Transverse colon (tissue), 4 donors: ENCODE measurements at regions of chr18 and their contacts with region 1.

Region 1: GRCh38 chr18:3447895-3448837 is 1.8 kb upstream of the TGIF1 start:
- DNase-seq: peak; percentile 95
- H3K4me3 ChIP-seq: peak overlapping the region; percentile 68 to 87 (median 80)
- H3K27ac ChIP-seq: peak overlapping the region; percentile 98 to 99 (median 99)
- H3K4me1 ChIP-seq: peaks cover 4 to 20% (median 10%) of the 10 kb centered on the region in 4 donors
- H3K27me3 ChIP-seq: no peaks in the 10 kb centered on the region
- CTCF ChIP-seq: peak in 1 of 5 experiments; percentile 15
- EP300 ChIP-seq: no peak
- POLR2A ChIP-seq: peak; percentile 97

Region 2: DNA sequence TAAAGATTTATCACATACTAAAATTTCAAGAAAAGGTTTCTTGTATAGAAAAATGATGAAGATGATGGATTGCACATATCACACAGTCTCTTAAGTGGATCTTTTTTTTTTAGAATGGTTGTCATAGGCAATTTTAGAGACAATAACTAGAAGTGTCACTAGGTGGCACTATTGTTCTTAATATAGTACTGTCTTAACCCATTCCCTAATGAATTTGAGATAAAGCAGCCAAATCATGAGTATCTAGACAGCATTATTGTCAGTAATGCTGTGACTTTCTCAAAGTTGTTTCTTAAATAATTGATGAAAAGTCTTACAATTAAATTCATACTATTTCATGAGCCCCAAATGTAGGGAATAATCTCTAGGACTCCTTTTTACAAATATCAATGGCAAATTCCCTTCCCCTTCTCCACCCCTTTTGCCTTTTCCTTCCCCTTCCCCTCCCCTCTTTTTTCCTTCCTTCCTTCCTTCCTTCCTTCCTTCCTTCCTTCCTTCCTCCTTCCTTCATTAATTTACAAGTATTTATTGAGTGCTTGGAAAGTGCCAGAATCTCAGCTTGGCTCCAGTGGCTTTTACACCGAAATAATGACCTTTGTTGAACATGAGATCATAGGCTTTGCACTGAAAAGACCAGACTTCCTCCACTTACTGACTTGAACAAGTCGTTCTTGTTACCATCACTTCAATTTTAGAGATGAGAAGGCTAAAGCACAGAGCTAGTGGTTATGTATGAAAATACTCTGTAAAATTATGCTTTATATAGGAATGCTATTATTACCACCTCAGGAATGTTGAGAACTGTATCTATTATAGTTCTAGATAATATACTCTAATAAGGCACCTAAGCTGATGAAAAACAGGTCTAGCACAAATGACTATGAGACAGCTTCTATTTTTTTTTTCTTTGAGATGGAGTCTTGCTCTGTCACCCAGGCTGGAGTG is 166.4 kb before region 1 on chr18:
- in situ Hi-C with region 1: loop called in 3 of 4 experiments (anchors 10 to 25 kb)
- intact Hi-C with region 1: loop called (anchors 10 kb)
- DNase-seq: no peak
- H3K4me3 ChIP-seq: no peak overlapping the region
- H3K27ac ChIP-seq: peak overlapping the region in 1 of 4 donors; percentile 9
- H3K4me1 ChIP-seq: no peaks in the 10 kb centered on the region
- H3K27me3 ChIP-seq: no peaks in the 10 kb centered on the region
- CTCF ChIP-seq: peak; percentile 64 to 85 (median 78)
- EP300 ChIP-seq: no peak
- POLR2A ChIP-seq: no peak

Region 3: DNA sequence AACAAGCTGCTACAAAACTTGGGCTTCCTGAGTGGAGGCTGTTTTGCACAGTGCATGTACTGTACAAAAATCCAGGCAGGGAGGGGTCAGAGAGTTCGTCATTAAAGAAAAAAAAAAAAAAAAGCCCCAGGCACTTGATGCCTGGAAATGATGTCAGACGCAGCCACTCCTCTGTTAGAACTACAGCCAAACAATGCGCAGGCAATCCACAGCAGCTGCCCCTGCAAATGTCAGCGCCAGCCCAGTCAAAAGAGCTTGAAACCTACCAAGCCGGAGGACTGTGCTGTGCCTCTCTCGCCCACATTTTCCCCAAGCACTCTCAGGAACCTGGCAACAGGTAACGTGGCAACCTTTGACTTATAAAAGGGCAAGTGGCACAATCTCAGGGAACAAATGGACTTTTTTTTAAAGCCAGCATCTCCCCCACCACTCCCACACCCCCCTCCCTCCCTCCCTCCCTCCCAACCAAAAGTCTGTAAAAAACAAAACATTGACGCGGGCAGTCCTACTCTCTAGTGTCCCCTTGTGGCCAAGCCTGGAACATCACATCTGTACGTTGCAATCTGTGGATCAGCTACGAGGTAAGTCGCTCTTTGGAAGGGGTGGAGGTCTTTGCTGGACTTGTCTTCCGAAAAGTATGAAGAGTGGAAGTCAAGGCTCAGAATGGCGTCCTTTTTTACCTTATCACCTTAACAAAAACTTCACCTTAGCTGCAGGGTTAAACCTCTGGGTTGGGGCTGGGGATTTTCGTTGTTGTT is 145.9 kb after region 1 on chr18:
- in situ Hi-C with region 1: loop called in 2 of 4 experiments (anchors 10 to 25 kb)
- intact Hi-C with region 1: loop called (anchors 2 kb)
- DNase-seq: peak; percentile 92
- H3K4me3 ChIP-seq: peak overlapping the region; percentile 20 to 45 (median 37)
- H3K27ac ChIP-seq: peak overlapping the region; percentile 96 to 99 (median 98)
- H3K4me1 ChIP-seq: peaks cover 22 to 47% (median 42%) of the 10 kb centered on the region in 4 donors
- H3K27me3 ChIP-seq: no peaks in the 10 kb centered on the region
- CTCF ChIP-seq: peak; percentile 91 to 96 (median 95)
- EP300 ChIP-seq: peak; percentile 59
- POLR2A ChIP-seq: peak; percentile 80

Region 4: GRCh38 chr18:3604498-3605408 is 156.6 kb after region 1 on chr18:
- in situ Hi-C with region 1: loop called in 3 of 4 experiments (anchors 5 to 25 kb)
- intact Hi-C with region 1: no loop called
- DNase-seq: no peak
- H3K4me3 ChIP-seq: peak overlapping the region in 3 of 4 donors; percentile 18 to 48 (median 21)
- H3K27ac ChIP-seq: peak overlapping the region; percentile 91 to 96 (median 94)
- H3K4me1 ChIP-seq: peaks cover 10 to 55% (median 34%) of the 10 kb centered on the region in 4 donors
- H3K27me3 ChIP-seq: no peaks in the 10 kb centered on the region
- CTCF ChIP-seq: no peak
- EP300 ChIP-seq: no peak
- POLR2A ChIP-seq: peak; percentile 27

Region 5: GRCh38 chr18:3665780-3666525 is 217.8 kb after region 1 on chr18:
- in situ Hi-C with region 1: loop called in 2 of 4 experiments (anchors 10 kb)
- intact Hi-C with region 1: loop called (anchors 5 kb)
- DNase-seq: peak; percentile 88
- H3K4me3 ChIP-seq: peak overlapping the region in 3 of 4 donors; percentile 5 to 33 (median 11)
- H3K27ac ChIP-seq: peak overlapping the region; percentile 78 to 84 (median 82)
- H3K4me1 ChIP-seq: peaks cover 0 to 27% (median 11%) of the 10 kb centered on the region in 4 donors
- H3K27me3 ChIP-seq: no peaks in the 10 kb centered on the region
- CTCF ChIP-seq: peak; percentile 91 to 98 (median 92)
- EP300 ChIP-seq: no peak
- POLR2A ChIP-seq: no peak